Activated CD4-positive, alpha-beta memory T cell treated with anti-CD3 and anti-CD28 coated beads for 36 hours (primary cell): ENCODE measurements at regions of chr14 and their contacts with region 1.

Region 1: DNA sequence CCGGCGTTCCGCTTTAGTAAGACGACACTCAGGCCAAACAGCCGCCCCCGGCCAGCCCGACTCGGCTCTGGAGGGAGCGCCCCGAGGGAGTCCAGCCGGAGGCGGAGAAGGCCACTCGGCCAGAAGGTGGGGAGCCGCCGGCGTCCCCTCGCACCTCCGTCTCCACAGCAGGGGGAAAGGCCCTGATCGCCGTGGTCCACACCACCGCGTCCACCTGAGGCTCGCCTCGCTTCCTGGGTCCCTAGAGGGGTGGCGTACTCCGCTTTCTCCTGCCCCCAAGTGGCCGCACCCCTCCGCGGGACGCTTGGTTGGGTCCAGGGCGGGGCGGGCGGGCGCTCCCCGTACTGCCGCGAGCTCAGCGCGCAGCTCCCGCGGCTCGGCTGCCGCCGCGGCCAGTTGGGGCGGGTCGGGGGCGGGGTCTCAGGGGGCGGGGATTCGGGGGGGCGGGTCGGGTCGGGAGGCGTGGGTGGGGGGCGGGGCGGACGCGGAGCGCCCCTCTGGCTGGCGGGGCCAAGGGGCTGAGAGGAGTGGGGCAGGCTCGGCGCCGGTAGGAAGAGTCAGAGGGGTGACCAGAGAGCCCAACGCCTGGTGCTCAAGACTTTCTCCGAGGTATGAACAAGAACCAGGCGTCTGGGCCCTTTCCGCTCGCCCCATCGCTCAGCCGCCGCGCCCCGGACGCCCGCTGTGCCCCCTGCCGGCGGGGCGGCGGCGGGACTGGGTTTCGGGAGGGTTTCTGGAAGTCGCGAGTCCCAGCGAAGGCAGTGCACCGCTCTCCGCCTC is at the start of gene FRMD6:
- DNase-seq: peak; percentile 89
- H3K4me3 Mint-ChIP-seq: peak within 1 kb of the TSS; percentile 78
- H3K27ac Mint-ChIP-seq: peak within 1 kb of the TSS; percentile 5
- H3K4me1 Mint-ChIP-seq: peaks cover 26% of the 10 kb centered on the region
- H3K27me3 Mint-ChIP-seq: peaks cover 17% of the 10 kb centered on the region
- total RNA-seq, gene FRMD6: 3.2 to 3.4 TPM

Region 2: DNA sequence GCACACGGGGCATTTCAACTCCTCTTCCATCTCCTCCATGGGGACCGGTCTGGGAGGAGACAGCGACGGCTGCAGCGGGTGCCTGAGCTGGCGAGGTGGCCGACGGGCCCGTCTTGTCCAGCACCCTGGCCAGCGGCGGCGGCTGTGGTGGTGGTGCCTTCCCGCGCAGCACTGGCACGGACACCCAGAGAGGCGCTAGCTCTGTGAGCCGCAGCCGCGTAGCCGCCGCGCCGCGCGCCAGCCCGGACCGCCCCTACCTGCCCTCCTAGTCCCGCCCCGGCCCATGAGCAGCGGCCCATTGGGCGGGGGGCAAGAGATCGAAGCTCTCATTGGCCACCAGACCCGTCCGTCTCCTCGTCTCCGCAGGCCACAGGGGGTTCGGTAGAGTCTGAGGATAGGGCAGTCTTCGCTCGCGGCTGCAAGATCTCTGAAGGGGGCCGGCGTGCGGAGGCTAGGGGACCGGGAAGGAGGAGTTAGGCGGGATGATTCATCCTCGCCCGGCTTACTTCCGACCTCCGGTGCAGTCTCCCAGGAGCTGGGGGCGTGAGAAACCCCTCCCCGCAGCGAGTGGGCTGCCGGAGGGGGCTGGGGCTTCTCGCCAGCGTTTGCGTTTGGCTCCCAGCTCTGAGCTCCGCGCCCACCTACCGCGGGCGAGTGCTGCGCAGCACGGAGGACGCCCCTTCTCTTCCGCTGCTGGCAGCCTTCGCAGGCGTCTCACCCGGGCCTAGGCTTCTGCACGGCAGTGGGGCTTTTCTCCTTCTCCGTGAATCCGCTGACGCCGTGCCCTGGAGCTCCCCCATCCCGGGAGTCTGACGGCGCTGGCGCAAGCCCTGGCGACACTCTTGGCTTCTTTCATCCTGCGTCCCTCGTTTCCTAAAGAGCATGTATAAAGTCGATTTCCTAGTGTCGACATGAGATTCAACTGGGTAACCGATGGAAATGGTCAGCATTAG is 556.4 kb before region 1 on chr14 and contains the start of gene TRIM9:
- CTCF ChIA-PET with region 1: no interaction called
- POLR2A ChIA-PET with region 1: interaction called, 3 read pairs
- intact Hi-C with region 1: loop called (anchors 1 kb)
- DNase-seq: peak; percentile 95
- H3K4me3 Mint-ChIP-seq: peak within 1 kb of the TSS; percentile 81
- H3K27ac Mint-ChIP-seq: peak within 1 kb of the TSS; percentile 33
- H3K4me1 Mint-ChIP-seq: peaks cover 10% of the 10 kb centered on the region
- H3K27me3 Mint-ChIP-seq: peaks cover 22% of the 10 kb centered on the region
- total RNA-seq, gene TRIM9: 0.36 to 0.40 TPM

Region 3: DNA sequence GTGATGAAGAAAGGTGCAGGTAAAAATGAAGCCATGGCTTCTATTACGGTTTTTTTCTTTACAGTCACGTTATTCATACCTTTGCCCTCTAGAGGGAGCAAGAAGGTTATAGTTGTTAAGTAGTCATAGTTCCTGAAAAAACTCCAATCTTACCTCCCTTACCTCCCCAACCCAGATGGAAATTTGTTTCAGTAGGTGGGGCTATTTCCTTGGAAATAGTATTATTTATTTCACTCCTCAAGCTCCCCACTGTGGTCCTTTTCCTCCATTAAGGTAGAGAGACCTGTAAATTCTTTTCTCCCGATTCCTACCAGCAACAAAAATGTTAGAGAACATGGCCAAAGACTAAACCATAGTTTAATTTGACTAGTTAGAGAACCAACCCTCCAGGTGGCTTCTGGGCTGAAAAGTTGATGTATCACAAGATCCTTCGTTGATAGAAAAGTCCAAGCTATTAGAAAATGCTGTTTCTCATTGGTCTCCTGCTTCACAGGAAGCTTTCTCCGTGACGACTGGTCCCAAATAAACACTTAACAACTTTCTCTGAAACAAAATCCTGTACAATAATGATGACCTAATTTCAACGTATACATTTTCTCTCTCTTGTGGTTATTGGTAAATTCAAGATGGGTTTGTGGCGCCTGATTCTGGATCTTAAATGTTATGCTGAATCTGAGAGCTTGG is 368.0 kb before region 1 on chr14:
- CTCF ChIA-PET with region 1: interaction called, 4 read pairs
- POLR2A ChIA-PET with region 1: no interaction called
- intact Hi-C with region 1: loop called (anchors 10 kb)
- DNase-seq: no peak
- H3K4me3 Mint-ChIP-seq: no peak overlapping the region
- H3K27ac Mint-ChIP-seq: no peak overlapping the region
- H3K4me1 Mint-ChIP-seq: no peaks in the 10 kb centered on the region
- H3K27me3 Mint-ChIP-seq: no peaks in the 10 kb centered on the region

Region 4: DNA sequence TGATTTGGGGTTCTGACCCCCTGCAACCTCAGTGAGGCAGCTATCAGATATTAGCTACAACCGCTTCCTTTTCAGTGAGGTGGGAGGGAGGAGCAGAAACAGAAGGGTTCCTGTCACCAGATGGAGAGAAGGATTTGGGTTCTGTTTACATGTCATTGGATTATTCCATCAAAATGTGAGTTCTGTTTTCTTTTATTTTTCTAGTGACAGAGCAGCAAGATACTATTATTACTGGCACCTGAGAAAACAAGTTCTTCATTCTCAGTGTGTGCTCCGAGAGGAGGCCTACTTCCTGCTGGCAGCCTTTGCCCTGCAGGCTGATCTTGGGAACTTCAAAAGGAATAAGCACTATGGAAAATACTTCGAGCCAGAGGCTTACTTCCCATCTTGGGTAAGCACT is 53.0 kb after region 1 on chr14:
- CTCF ChIA-PET with region 1: no interaction called
- POLR2A ChIA-PET with region 1: no interaction called
- intact Hi-C with region 1: no loop called
- DNase-seq: no peak
- H3K4me3 Mint-ChIP-seq: no peak overlapping the region
- H3K27ac Mint-ChIP-seq: no peak overlapping the region
- H3K4me1 Mint-ChIP-seq: no peaks in the 10 kb centered on the region
- H3K27me3 Mint-ChIP-seq: no peaks in the 10 kb centered on the region

Region 5: DNA sequence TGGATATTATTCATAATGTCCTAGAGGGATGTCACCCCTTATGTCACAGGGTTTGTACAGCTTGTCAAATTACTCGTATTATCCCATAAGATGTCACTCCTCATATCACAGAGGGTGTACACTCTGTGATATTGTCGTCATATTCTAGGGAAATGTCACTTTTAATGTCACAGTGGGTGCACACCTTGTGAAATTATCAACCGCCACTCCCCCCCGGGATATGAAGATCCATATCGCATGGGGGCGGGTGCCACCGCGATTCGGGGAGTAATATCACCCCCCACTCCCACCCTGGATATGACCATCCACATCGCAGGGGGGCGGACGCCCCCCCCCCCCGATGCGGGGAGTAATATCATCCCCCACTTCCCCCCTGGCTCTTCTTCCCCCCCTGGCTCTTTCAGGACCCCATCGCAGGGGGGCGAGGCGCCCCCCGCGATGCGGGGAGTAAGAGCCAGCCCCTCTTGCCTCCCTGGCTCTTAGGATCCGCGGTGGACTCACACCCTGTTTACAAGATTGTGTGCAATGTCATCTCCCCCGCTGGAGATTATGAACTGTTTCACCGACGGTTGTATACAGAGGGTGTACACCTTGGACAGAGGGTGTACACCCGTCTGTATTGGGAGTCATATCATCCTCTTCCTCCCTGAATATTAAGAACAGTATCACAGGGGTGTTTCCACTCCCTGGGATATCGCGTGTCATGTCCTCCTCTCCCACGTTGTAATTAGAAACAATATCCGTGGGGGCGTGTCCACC is 93.0 kb after region 1 on chr14:
- CTCF ChIA-PET with region 1: interaction called, 10 read pairs
- POLR2A ChIA-PET with region 1: no interaction called
- intact Hi-C with region 1: loop called (anchors 2 kb)
- DNase-seq: peak; percentile 44
- H3K4me3 Mint-ChIP-seq: no peak overlapping the region
- H3K27ac Mint-ChIP-seq: no peak overlapping the region
- H3K4me1 Mint-ChIP-seq: no peaks in the 10 kb centered on the region
- H3K27me3 Mint-ChIP-seq: peaks cover 4% of the 10 kb centered on the region

Region 6: DNA sequence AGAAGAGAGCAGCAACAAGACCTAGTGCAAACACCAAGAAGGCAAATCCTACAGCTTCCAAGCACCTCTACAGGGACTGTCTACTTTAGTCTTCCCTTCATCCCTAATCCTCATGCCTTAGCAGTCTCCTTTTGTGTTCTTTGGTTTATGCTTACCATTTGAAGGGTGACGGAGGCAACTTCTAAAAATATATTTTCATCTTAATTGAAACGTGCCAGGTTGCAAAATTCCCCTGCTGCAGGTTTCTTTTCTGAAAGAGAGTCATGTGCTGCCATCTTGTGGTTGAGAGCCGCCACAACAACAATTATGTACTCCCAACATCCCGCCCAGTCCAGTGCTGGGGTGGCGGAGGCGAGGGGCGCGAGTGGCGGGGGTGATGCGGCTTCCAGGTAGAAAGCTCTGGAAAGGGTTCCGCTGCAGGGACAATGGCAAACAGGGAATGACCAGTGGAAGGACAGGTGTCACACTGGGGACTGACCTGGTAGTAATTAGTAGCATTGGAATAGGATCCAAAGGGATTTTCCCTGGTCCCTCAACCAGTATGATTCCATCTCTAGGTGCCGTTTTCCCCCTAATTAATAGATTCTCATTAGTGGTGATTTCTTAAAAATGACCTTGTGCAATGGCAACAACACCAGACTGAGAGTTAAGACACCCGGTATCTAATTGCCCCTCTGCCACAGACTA is 128.6 kb after region 1 on chr14:
- CTCF ChIA-PET with region 1: interaction called, 26 read pairs
- POLR2A ChIA-PET with region 1: no interaction called
- intact Hi-C with region 1: loop called (anchors 1 kb)
- DNase-seq: peak; percentile 81
- H3K4me3 Mint-ChIP-seq: no peak overlapping the region
- H3K27ac Mint-ChIP-seq: no peak overlapping the region
- H3K4me1 Mint-ChIP-seq: peaks cover 24% of the 10 kb centered on the region
- H3K27me3 Mint-ChIP-seq: peaks cover 18% of the 10 kb centered on the region

Region 7: DNA sequence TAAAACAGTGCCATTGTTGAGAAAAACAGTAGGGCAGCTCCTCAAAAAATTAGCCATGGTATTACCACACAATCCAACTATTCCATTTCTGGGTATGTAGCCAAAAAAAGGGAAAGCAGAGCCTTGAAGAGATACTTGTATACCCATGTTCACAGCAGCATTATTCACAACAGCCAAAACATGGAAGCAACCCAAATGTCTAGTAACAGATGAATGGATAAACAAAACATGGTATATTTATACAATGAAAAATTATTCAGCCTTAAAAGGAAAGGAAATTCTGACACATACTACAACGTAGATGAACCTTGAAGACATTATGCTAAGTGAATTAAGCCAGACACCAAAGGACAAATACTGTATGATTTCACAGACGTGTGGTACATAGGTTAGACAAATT is 141.2 kb after region 1 on chr14:
- CTCF ChIA-PET with region 1: no interaction called
- POLR2A ChIA-PET with region 1: no interaction called
- intact Hi-C with region 1: no loop called
- DNase-seq: no peak
- H3K4me3 Mint-ChIP-seq: no peak overlapping the region
- H3K27ac Mint-ChIP-seq: no peak overlapping the region
- H3K4me1 Mint-ChIP-seq: no peaks in the 10 kb centered on the region
- H3K27me3 Mint-ChIP-seq: peaks cover 7% of the 10 kb centered on the region

Region 8: DNA sequence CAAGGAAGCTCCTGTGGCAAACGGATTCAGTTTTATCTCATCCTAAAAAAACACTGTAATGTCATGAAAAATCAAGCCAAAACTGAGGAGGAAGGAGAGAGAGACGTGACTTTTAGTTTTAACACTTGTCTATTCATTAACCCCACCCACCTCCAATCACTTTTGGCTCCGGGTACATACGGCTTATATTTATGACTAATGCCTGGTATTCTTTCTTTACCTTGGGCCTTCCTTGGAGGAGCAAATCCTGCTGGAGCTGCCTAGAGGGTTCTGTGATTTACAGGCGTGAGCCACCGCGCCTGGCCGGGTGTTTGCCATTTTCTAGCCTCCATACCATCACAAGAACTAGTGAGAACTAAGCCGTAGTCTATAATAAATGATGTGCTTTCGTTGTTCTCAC is 277.0 kb after region 1 on chr14:
- CTCF ChIA-PET with region 1: no interaction called
- POLR2A ChIA-PET with region 1: no interaction called
- intact Hi-C with region 1: no loop called
- DNase-seq: no peak
- H3K4me3 Mint-ChIP-seq: no peak overlapping the region
- H3K27ac Mint-ChIP-seq: no peak overlapping the region
- H3K4me1 Mint-ChIP-seq: peaks cover 62% of the 10 kb centered on the region
- H3K27me3 Mint-ChIP-seq: no peaks in the 10 kb centered on the region

Region 9: GRCh38 chr14:51989293-51990234 is 338.0 kb after region 1 on chr14 and contains the start of gene RTRAF:
- CTCF ChIA-PET with region 1: no interaction called
- POLR2A ChIA-PET with region 1: no interaction called
- intact Hi-C with region 1: loop called (anchors 5 kb)
- DNase-seq: peak; percentile 94
- H3K4me3 Mint-ChIP-seq: peak within 1 kb of the TSS; percentile 89
- H3K27ac Mint-ChIP-seq: peak within 1 kb of the TSS; percentile 79
- H3K4me1 Mint-ChIP-seq: peaks cover 35% of the 10 kb centered on the region
- H3K27me3 Mint-ChIP-seq: no peaks in the 10 kb centered on the region
- total RNA-seq, gene RTRAF: 222 to 238 TPM

Region 10: GRCh38 chr14:52369305-52369801 is 717.8 kb after region 1 on chr14:
- CTCF ChIA-PET with region 1: no interaction called
- POLR2A ChIA-PET with region 1: no interaction called
- intact Hi-C with region 1: no loop called
- DNase-seq: no peak
- H3K4me3 Mint-ChIP-seq: no peak overlapping the region
- H3K27ac Mint-ChIP-seq: no peak overlapping the region
- H3K4me1 Mint-ChIP-seq: no peaks in the 10 kb centered on the region
- H3K27me3 Mint-ChIP-seq: no peaks in the 10 kb centered on the region